Esophagus squamous epithelium (tissue), 5 donors: ENCODE measurements at regions of chr18 and their contacts with region 1.

Region 1: GRCh38 chr18:25005541-25006403 is 346.2 kb downstream of the ZNF521 start:
- DNase-seq: no peak
- H3K4me3 ChIP-seq: no peak overlapping the region
- H3K27ac ChIP-seq: no peak overlapping the region
- H3K4me1 ChIP-seq: no peaks in the 10 kb centered on the region
- H3K27me3 ChIP-seq: no peaks in the 10 kb centered on the region
- CTCF ChIP-seq: no peak
- POLR2A ChIP-seq: no peak

Region 2: GRCh38 chr18:24923138-24923537 is 82.6 kb before region 1 on chr18:
- intact Hi-C with region 1: loop called (anchors 10 kb)
- DNase-seq: no peak
- H3K4me3 ChIP-seq: no peak overlapping the region
- H3K27ac ChIP-seq: no peak overlapping the region
- H3K4me1 ChIP-seq: no peaks in the 10 kb centered on the region
- H3K27me3 ChIP-seq: no peaks in the 10 kb centered on the region
- CTCF ChIP-seq: no peak
- POLR2A ChIP-seq: no peak

Region 3: GRCh38 chr18:25099895-25100294 is 94.1 kb after region 1 on chr18:
- intact Hi-C with region 1: no loop called
- DNase-seq: no peak
- H3K4me3 ChIP-seq: no peak overlapping the region
- H3K27ac ChIP-seq: no peak overlapping the region
- H3K4me1 ChIP-seq: peaks cover 0 to 6% (median 0%) of the 10 kb centered on the region in 3 donors
- H3K27me3 ChIP-seq: no peaks in the 10 kb centered on the region
- CTCF ChIP-seq: no peak
- POLR2A ChIP-seq: no peak

Region 4: GRCh38 chr18:25446972-25447371 is 441.2 kb after region 1 on chr18:
- intact Hi-C with region 1: no loop called
- DNase-seq: no peak
- H3K4me3 ChIP-seq: no peak overlapping the region
- H3K27ac ChIP-seq: no peak overlapping the region
- H3K4me1 ChIP-seq: no peaks in the 10 kb centered on the region
- H3K27me3 ChIP-seq: no peaks in the 10 kb centered on the region
- CTCF ChIP-seq: no peak
- POLR2A ChIP-seq: no peak